Dorsolateral prefrontal cortex (tissue), 120 donors: ENCODE measurements at regions of chr12 and their contacts with region 1.

Region 1: GRCh38 chr12:64403707-64404469 is at the start of gene XPOT:
- DNase-seq: peak; percentile 77 to 94 (median 91)
- H3K4me3 ChIP-seq: peak within 1 kb of the TSS; percentile 62 to 99 (median 91)
- H3K27ac ChIP-seq: peak within 1 kb of the TSS; percentile 79 to 99 (median 95)
- H3K27me3 ChIP-seq: no peaks in the 10 kb centered on the region
- CTCF ChIP-seq: peak in 37 of 56 donors; percentile 6 to 54 (median 31)
- total RNA-seq, gene XPOT: 47.3 to 92.9 (median 68.0) TPM

Region 2: GRCh38 chr12:63826006-63826585 is 577.8 kb before region 1 on chr12:
- intact Hi-C with region 1: loop called in 1 of 2 experiments (anchors 5 kb)
- DNase-seq: no peak
- H3K4me3 ChIP-seq: no peak overlapping the region
- H3K27ac ChIP-seq: no peak overlapping the region
- H3K27me3 ChIP-seq: peaks cover 0 to 3% (median 0%) of the 10 kb centered on the region in 45 donors
- CTCF ChIP-seq: peak; percentile 51 to 92 (median 80)

Region 3: DNA sequence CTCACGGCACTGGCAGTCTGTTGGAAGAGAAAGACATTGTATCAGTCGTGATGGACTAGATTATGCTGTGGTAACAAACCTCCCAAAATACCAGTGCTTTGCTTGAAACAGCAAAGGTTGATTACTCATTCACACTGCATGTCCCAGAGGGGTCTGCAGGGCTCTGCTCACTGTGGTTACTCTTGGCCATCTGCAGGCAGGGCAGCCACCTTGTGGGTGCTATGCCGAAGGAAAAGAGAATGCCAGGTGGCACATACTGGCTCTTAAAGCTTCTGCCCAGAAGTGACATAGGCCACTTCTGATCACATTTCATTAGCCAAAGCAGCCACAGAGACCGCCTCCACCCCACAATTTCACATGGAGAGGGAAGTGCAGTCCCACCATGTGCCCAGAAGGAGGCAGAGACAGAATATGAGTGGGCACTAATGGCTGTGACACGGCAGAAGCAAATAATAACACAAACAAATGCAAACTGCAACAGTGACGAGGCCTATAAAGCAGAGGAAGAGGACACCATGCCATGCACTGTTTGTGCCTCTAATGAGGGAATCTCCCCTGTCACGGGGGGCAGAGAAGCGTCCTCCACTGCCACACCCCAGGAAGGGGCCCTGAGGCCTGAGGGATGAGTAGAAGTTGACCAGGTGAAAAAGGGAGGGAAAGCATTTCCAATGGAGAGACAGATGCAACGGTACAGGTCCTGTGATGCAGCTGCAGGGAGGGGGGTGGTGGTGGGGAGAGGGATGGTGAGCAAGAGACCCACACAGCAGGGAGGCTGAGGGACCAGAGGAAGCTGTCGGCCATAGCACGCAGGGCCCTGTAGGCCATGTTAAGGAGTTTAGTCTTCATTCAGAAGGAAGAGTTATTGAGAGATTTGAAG is 130.1 kb before region 1 on chr12:
- intact Hi-C with region 1: loop called in 1 of 2 experiments (anchors 10 kb)
- DNase-seq: no peak
- H3K4me3 ChIP-seq: no peak overlapping the region
- H3K27ac ChIP-seq: no peak overlapping the region
- H3K27me3 ChIP-seq: no peaks in the 10 kb centered on the region
- CTCF ChIP-seq: peak in 49 of 56 donors; percentile 17 to 64 (median 45)

Region 4: DNA sequence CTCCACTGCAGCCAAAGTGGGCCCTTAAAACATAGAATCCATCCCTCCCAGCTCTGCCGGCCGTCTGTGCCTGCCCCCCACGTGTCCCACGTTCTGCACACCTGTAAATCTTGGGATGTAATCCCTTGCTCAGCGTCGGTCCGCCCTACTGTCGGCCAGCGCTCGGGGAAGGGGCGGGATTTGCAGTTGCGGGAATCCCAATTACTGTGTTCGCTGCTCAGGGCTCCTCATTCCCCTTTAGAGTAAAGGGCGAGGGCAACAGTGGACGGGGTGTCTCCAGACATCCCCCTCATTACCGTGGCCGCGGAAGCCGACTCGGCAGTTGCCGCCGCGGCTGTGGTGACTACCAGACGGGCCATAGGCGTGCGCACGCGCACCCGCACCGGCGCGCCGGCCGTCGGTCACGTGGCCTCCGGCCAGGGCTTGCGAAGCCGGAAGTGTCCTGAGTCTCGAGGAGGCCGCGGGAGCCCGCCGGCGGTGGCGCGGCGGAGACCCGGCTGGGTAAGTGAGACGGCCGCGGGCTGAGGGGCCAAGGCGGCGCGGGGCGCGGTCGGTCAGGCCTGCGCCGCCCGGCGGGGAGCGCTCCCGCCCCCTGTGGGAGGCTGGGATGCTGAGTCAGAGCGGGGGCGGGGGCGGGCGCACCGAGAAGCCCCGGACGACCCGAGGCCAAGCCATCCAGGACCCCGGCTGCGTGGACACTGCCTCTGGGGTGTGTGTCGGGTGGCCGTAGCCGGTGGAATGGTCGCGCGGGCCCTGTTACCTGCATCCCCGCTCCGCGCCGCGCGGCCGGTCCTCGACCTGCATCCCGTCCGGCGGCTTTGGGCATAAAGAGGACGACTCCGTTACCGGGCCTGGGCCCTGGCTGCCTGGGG is 48.0 kb after region 1 on chr12 and contains the start of gene TBK1:
- intact Hi-C with region 1: loop called (anchors 2 to 5 kb)
- DNase-seq: peak; percentile 81 to 96 (median 91)
- H3K4me3 ChIP-seq: peak within 1 kb of the TSS; percentile 66 to 100 (median 93)
- H3K27ac ChIP-seq: peak within 1 kb of the TSS; percentile 66 to 98 (median 94)
- H3K27me3 ChIP-seq: no peaks in the 10 kb centered on the region
- CTCF ChIP-seq: peak in 27 of 56 donors; percentile 0 to 61 (median 30)
- total RNA-seq, gene TBK1: 17.5 to 41.7 (median 28.7) TPM